Upper lobe of right lung (tissue), 1 donor: ENCODE measurements at regions of chr9 and their contacts with region 1.

Region 1: GRCh38 chr9:33813712-33814641 is 3.0 kb upstream of the UBE2R2 start:
- DNase-seq: no peak
- ATAC-seq: no peak
- H3K4me3 ChIP-seq: no peak overlapping the region
- H3K27ac ChIP-seq: peak overlapping the region; percentile 97
- H3K4me1 ChIP-seq: peaks cover 37% of the 10 kb centered on the region
- H3K27me3 ChIP-seq: no peaks in the 10 kb centered on the region
- CTCF ChIP-seq: peak; percentile 70

Region 2: GRCh38 chr9:33852216-33852826 is 38.3 kb after region 1 on chr9:
- intact Hi-C with region 1: loop called (anchors 5 kb)
- DNase-seq: peak; percentile 71
- ATAC-seq: peak; percentile 95
- H3K4me3 ChIP-seq: no peak overlapping the region
- H3K27ac ChIP-seq: no peak overlapping the region
- H3K4me1 ChIP-seq: peaks cover 32% of the 10 kb centered on the region
- H3K27me3 ChIP-seq: no peaks in the 10 kb centered on the region
- CTCF ChIP-seq: peak; percentile 64

Region 3: DNA sequence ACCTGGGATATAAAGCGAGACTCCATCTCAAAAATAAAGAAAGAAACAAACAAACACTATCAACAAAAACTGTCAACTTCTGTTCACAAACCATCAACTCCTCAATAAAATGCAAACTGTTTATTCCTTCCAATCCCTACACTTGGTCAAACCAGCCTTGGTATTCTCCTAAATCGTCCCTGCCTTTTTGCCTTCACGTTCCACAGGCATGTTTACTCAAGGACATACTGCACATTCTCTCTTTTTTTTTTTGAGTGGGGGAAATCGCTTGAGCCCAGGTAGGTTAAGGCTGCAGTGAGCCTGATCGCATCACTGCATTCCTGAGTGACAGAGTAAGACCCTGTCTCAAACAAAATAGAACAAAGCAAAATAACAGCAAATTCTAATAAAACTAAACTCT is 221.7 kb after region 1 on chr9:
- intact Hi-C with region 1: no loop called
- DNase-seq: peak; percentile 3
- ATAC-seq: peak; percentile 62
- H3K4me3 ChIP-seq: no peak overlapping the region
- H3K27ac ChIP-seq: no peak overlapping the region
- H3K4me1 ChIP-seq: no peaks in the 10 kb centered on the region
- H3K27me3 ChIP-seq: no peaks in the 10 kb centered on the region
- CTCF ChIP-seq: no peak

Region 4: GRCh38 chr9:34072868-34073590 is 259.1 kb after region 1 on chr9:
- intact Hi-C with region 1: no loop called
- DNase-seq: no peak
- ATAC-seq: peak; percentile 90
- H3K4me3 ChIP-seq: no peak overlapping the region
- H3K27ac ChIP-seq: peak overlapping the region; percentile 64
- H3K4me1 ChIP-seq: peaks cover 16% of the 10 kb centered on the region
- H3K27me3 ChIP-seq: no peaks in the 10 kb centered on the region
- CTCF ChIP-seq: no peak